Right ventricle myocardium inferior (tissue), 1 donor: ENCODE measurements at regions of chr19 and their contacts with region 1.

Region 1: GRCh38 chr19:56725829-56726424 is 54.4 kb upstream of the ZNF835 start:
- DNase-seq: no peak
- ATAC-seq: no peak

Region 2: DNA sequence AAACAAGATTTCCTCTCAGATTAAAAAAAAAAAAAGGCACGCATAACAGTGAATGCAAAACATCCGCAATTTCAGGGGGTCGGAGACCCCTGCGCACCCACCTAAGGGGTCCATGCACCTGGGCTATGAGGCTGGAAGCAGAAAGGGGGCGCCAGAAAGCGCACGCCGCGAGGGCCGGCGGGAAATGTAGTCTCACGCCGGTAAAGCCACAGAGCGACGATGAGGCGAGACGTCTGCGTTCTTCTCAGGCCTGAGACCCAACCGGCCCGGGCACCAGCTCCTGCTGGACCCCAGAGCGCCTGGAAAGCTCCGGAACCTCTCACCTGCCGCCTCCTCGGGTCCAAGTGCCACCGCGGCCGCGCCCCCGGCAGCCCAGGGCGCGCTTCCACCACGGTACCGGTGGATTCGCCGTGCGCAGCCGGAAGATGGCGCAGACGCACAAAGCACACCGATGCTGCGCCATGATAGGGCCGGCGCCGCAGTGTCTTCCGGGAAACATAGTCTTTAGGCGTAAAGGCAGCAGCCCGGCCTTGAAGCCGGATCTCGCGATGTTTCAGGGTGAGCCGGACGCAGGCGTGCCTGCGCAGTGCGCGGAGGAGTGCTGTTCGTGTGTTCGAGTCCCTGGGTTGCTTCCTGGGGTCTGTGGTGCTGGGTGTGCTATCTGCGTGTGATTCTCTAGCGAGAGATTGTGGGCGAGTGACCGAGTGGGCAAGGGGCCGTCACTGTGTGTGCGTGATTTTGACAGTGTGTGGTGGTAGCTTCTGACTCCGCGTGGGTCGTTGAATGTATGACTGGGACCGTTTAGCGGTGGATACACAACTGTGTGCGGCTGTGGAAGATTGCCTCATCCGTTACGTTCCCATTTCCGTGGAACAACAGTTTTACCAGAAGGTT is 332.6 kb before region 1 on chr19 and contains the start of gene ZNF582:
- intact Hi-C with region 1: loop called (anchors 10 kb)
- DNase-seq: peak; percentile 99
- ATAC-seq: peak; percentile 100
- total RNA-seq, gene ZNF582: 3.6 TPM

Region 3: GRCh38 chr19:56577719-56578602 is 148.0 kb before region 1 on chr19:
- intact Hi-C with region 1: no loop called
- DNase-seq: no peak
- ATAC-seq: no peak

Region 4: GRCh38 chr19:56660381-56661107 is 65.4 kb before region 1 on chr19:
- intact Hi-C with region 1: no loop called
- DNase-seq: no peak
- ATAC-seq: peak; percentile 64